Stomach (tissue), 19 donors: ENCODE measurements at regions of chr15 and their contacts with region 1.

Region 1: DNA sequence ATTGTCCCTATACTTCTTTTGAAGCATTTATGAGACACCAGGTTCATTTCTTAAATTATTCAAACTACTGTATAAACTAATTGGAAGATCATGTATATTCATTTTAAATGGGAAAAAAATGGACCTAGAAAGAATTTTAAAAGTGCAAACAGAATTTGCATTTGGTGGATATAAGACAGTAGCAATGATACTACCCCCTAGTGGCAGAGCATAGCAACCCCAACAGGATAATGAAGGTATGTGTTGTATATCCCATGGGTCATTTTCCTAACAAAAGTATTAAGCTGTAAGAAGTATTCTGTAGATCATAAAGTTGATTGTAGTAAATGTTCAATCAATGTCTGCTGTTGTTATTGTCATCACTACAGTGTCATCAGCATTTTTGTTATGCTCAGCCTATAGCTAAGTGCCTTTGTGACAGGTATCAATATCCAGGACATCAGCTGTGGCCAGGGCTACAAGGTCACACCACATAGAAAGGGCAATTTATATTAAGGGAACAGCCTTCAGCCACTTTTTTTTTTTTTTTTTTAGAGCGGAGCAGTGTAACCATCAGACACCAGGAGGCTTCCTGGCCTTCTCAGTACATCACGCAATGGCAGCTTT is 175.8 kb downstream of the FOXB1 start:
- DNase-seq: peak in 1 of 2 donors; percentile 56
- H3K4me3 ChIP-seq: no peak overlapping the region
- H3K27ac ChIP-seq: no peak overlapping the region
- H3K4me1 ChIP-seq: no peaks in the 10 kb centered on the region
- H3K27me3 ChIP-seq: peaks cover 0 to 15% (median 0%) of the 10 kb centered on the region in 3 donors
- CTCF ChIP-seq: peak in 5 of 7 experiments; percentile 27 to 78 (median 67)
- EP300 ChIP-seq: no peak
- POLR2A ChIP-seq: no peak

Region 2: DNA sequence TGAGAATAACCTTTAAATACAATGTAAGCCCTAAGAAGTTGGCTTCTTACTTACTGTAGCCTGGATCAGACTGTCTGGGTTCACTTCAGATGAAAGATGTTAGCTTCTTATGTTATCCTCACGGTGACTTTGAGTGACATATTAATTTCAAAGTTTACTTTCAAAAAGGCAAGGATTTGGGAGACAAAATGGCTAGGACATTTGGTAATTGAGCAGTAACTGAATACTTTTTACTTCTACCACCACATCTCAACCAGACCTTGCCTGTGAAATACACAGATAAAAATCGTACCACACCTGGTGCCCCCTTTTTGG is 454.8 kb before region 1 on chr15:
- intact Hi-C with region 1: loop called (anchors 10 kb)
- DNase-seq: no peak
- H3K4me3 ChIP-seq: no peak overlapping the region
- H3K27ac ChIP-seq: no peak overlapping the region
- H3K4me1 ChIP-seq: peaks cover 0 to 9% (median 4%) of the 10 kb centered on the region in 4 donors
- H3K27me3 ChIP-seq: peaks cover 0 to 19% (median 0%) of the 10 kb centered on the region in 3 donors
- CTCF ChIP-seq: no peak
- EP300 ChIP-seq: no peak
- POLR2A ChIP-seq: no peak

Region 3: GRCh38 chr15:59917504-59918157 is 262.3 kb before region 1 on chr15:
- intact Hi-C with region 1: loop called (anchors 5 kb)
- DNase-seq: peak; percentile 72 to 81
- H3K4me3 ChIP-seq: no peak overlapping the region
- H3K27ac ChIP-seq: no peak overlapping the region
- H3K4me1 ChIP-seq: no peaks in the 10 kb centered on the region
- H3K27me3 ChIP-seq: peaks cover 0 to 9% (median 9%) of the 10 kb centered on the region in 3 donors
- CTCF ChIP-seq: peak in 4 of 7 experiments; percentile 24 to 43 (median 38)
- EP300 ChIP-seq: no peak
- POLR2A ChIP-seq: no peak

Region 4: DNA sequence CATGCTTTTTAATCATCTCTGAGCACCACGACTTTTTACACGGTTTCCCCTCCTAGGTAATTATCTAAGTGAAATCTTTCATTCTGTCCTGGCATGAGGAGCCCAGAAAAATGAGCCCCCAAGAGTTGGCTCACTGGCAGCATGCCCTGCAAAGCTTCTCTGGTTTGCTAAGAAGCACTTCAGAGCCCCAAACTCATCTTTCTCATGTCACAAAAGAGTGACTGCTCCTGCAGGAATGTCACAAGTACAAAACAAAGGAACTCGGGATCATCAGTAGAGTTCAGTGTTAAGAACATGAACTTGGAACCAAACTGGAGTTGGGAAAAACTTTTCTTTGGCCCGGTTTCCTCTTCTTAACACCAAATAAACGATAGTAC is 51.9 kb before region 1 on chr15:
- intact Hi-C with region 1: no loop called
- DNase-seq: no peak
- H3K4me3 ChIP-seq: peak overlapping the region; percentile 42 to 57 (median 48)
- H3K27ac ChIP-seq: peak overlapping the region in 4 of 5 donors; percentile 56 to 81 (median 74)
- H3K4me1 ChIP-seq: peaks cover 0 to 18% (median 10%) of the 10 kb centered on the region in 4 donors
- H3K27me3 ChIP-seq: peaks cover 0 to under 1% (median 0%) of the 10 kb centered on the region in 3 donors
- CTCF ChIP-seq: no peak
- EP300 ChIP-seq: no peak
- POLR2A ChIP-seq: no peak

Region 5: GRCh38 chr15:60301005-60301404 is 121.1 kb after region 1 on chr15:
- intact Hi-C with region 1: no loop called
- DNase-seq: no peak
- H3K4me3 ChIP-seq: no peak overlapping the region
- H3K27ac ChIP-seq: no peak overlapping the region
- H3K4me1 ChIP-seq: peaks cover 0 to 12% (median 5%) of the 10 kb centered on the region in 4 donors
- H3K27me3 ChIP-seq: peaks cover 0 to 4% (median 0%) of the 10 kb centered on the region in 3 donors
- CTCF ChIP-seq: no peak
- EP300 ChIP-seq: no peak
- POLR2A ChIP-seq: no peak